ENCODE measurements at regions of chr12 and their contacts with region 1.

Region 1: GRCh38 chr12:71846322-71846940 is 6.9 kb downstream of the TBC1D15 start:
- DNase-seq: peak; percentile 57
- H3K4me3 Mint-ChIP-seq: no peak overlapping the region
- H3K27ac Mint-ChIP-seq: no peak overlapping the region
- H3K4me1 Mint-ChIP-seq: peaks cover 4% of the 10 kb centered on the region
- H3K27me3 Mint-ChIP-seq: no peaks in the 10 kb centered on the region
- CTCF ChIP-seq: peak; percentile 48

Region 2: GRCh38 chr12:71772735-71773134 is 73.7 kb before region 1 on chr12:
- CTCF ChIA-PET with region 1: interaction called, 75 read pairs
- POLR2A ChIA-PET with region 1: interaction called, 3 read pairs
- intact Hi-C with region 1: no loop called
- DNase-seq: no peak
- H3K4me3 Mint-ChIP-seq: no peak overlapping the region
- H3K27ac Mint-ChIP-seq: no peak overlapping the region
- H3K4me1 Mint-ChIP-seq: peaks cover 7% of the 10 kb centered on the region
- H3K27me3 Mint-ChIP-seq: no peaks in the 10 kb centered on the region
- CTCF ChIP-seq: no peak

Region 3: GRCh38 chr12:71858848-71859247 is 12.4 kb after region 1 on chr12:
- CTCF ChIA-PET with region 1: interaction called, 12 read pairs
- POLR2A ChIA-PET with region 1: interaction called, 3 read pairs
- intact Hi-C with region 1: no loop called
- DNase-seq: no peak
- H3K4me3 Mint-ChIP-seq: no peak overlapping the region
- H3K27ac Mint-ChIP-seq: no peak overlapping the region
- H3K4me1 Mint-ChIP-seq: peaks cover 4% of the 10 kb centered on the region
- H3K27me3 Mint-ChIP-seq: no peaks in the 10 kb centered on the region
- CTCF ChIP-seq: no peak

Measured in MCF 10A (cell line).